PC-9 (cell line): ENCODE measurements at regions of chr5 and their contacts with region 1.

Region 1: DNA sequence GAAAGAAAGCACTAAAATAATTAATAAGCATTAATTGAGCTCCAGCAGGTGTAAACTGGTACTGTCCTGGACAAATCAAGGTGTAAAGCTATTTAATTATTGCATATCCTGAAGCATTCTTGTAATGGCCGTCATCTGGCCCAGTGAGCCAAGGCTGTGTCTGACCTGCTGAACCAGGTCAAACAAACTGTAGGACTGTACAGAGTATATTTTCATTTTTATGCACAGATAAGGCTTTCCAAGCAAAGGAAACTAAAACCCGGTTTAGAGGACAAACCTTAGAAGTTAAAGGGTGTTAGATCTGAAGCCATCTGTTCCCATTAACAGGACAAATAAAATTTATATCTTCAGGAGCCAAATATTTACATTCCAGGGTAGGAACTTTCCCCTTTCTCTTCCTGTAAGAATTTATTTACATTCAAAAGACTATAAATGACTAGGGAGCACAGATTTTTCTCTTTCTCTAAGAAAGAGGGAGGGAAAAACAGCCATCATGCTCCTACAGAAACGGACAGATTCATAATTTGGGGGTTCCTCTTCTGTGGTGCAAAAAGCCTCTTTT is 69.8 kb downstream of the ESM1 start:
- DNase-seq: no peak
- H3K4me3 ChIP-seq: no peak overlapping the region
- H3K27ac ChIP-seq: no peak overlapping the region
- H3K4me1 ChIP-seq: no peaks in the 10 kb centered on the region
- H3K27me3 ChIP-seq: peaks cover 20% of the 10 kb centered on the region
- CTCF ChIP-seq: no peak

Region 2: DNA sequence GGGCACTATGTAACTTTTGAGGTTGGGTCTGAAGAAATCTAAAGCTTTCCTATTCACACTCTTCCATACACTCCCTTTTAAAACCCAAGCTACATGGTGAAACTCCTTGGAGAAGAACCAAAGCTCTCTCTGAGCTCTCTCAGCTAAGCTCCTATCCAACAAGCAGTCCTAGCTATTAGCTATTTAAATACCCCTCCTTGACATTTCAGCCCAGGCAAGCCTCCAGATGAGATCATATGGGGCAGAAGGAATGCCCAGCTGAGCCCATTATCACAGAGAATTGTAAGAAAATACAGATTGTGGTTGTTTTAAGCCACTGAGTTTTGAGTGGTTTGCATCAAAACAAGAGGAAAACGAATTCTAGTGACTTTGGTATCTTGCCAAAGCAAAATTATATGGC is 444.9 kb before region 1 on chr5:
- CTCF ChIA-PET with region 1: no interaction called
- POLR2A ChIA-PET with region 1: interaction called, 10 read pairs
- intact Hi-C with region 1: no loop called
- DNase-seq: no peak
- H3K4me3 ChIP-seq: no peak overlapping the region
- H3K27ac ChIP-seq: no peak overlapping the region
- H3K4me1 ChIP-seq: no peaks in the 10 kb centered on the region
- H3K27me3 ChIP-seq: no peaks in the 10 kb centered on the region
- CTCF ChIP-seq: no peak